A673 (cell line): ENCODE measurements at regions of chr13 and their contacts with region 1.

Region 1: GRCh38 chr13:99442273-99442895 is 58.9 kb upstream of the TM9SF2 start:
- DNase-seq: peak; percentile 68
- H3K4me3 ChIP-seq: no peak overlapping the region
- H3K27ac ChIP-seq: no peak overlapping the region
- H3K4me1 ChIP-seq: no peaks in the 10 kb centered on the region
- H3K27me3 ChIP-seq: no peaks in the 10 kb centered on the region
- CTCF ChIP-seq: peak; percentile 90

Region 2: DNA sequence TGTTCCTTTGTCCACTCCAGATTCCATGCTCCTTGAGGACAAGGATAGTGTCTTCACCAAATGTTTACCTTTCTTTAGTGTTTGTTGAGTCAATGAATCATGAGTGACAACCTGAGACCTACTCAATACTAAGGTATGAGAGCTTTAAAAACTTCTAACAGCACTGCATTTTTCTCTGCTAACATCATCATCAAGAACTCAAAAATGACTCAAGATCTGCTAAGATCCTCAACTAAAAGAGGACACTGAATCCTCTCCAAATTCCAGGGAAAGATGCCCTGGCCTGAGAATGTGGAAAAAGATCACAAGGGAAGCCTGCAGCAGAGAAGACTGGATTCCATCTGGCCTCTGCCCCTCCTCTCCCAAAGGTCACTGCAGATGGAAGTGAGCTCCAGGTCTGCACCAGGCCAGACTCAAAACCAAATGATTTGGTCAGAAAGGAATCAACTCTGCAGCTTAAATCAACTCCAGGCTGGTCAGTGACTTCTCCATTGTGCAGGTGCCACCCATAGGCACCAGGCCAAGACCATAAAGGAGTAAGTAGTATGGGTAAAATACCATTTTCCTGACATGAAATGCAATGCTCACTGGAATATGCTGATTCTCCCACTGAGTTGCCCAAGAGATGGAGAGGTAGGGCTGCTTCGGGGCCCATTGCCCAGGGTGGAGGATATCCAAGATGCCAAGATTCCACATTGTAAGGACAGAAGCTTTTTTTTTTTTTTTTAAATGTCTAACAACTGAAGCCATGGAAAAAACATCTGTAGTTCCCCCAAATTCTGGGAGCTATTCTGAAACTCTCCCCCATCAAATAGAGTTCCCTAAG is 375.0 kb before region 1 on chr13:
- CTCF ChIA-PET with region 1: no interaction called
- POLR2A ChIA-PET with region 1: no interaction called
- intact Hi-C with region 1: no loop called
- DNase-seq: no peak
- H3K4me3 ChIP-seq: no peak overlapping the region
- H3K27ac ChIP-seq: no peak overlapping the region
- H3K4me1 ChIP-seq: peaks cover 3% of the 10 kb centered on the region
- H3K27me3 ChIP-seq: no peaks in the 10 kb centered on the region
- CTCF ChIP-seq: no peak

Region 3: GRCh38 chr13:99614385-99614885 is 172.1 kb after region 1 on chr13:
- CTCF ChIA-PET with region 1: interaction called, 4 read pairs
- POLR2A ChIA-PET with region 1: no interaction called
- intact Hi-C with region 1: loop called (anchors 2 kb)
- DNase-seq: peak; percentile 63
- H3K4me3 ChIP-seq: no peak overlapping the region
- H3K27ac ChIP-seq: no peak overlapping the region
- H3K4me1 ChIP-seq: peaks cover 4% of the 10 kb centered on the region
- H3K27me3 ChIP-seq: no peaks in the 10 kb centered on the region
- CTCF ChIP-seq: peak; percentile 54

Region 4: GRCh38 chr13:101115762-101116171 is 1673.4 kb after region 1 on chr13:
- CTCF ChIA-PET with region 1: no interaction called
- POLR2A ChIA-PET with region 1: no interaction called
- intact Hi-C with region 1: loop called (anchors 10 kb)
- DNase-seq: peak; percentile 92
- H3K4me3 ChIP-seq: no peak overlapping the region
- H3K27ac ChIP-seq: no peak overlapping the region
- H3K4me1 ChIP-seq: peaks cover 25% of the 10 kb centered on the region
- H3K27me3 ChIP-seq: peaks cover 8% of the 10 kb centered on the region
- CTCF ChIP-seq: peak; percentile 60